T-cell (primary cell): ENCODE measurements at regions of chr17 and their contacts with region 1.

Region 1: DNA sequence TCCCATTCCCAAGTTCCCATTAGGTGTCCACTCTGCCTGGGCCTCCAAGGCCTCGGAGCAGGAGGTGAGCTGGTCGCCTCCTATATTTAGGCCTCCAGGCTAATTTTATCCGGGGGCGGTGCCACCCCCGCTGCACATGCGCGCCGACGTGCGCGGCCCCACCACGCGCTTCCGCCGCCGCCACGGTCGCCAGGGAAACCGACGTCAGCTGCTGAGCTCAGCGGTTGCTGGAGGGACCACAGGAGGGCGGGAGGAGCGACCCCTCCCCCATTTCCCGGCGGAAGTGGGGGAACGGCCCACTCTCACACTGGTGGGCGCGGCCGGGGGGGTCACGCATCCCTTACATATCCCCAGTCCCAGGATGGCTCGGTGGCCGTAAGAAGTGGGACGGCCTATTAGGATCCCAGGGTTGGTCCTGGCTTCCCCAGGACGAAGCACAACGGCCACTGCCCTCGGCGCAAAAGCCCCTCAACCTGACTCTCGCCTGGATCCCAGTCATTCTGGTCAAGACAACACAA is 1.0 kb downstream of the PER1 start:
- DNase-seq: peak; percentile 62 to 96 (median 92)
- ATAC-seq: peak; percentile 53 to 67 (median 64)
- H3K4me3 ChIP-seq: peak overlapping the region; percentile 59 to 93
- H3K4me3 Mint-ChIP-seq: peak overlapping the region in 1 of 3 donors; percentile 84
- H3K27ac ChIP-seq: peak overlapping the region; percentile 100
- H3K27ac Mint-ChIP-seq: peak overlapping the region in 1 of 2 donors; percentile 55
- H3K4me1 ChIP-seq: peaks cover 25 to 68% of the 10 kb centered on the region in 2 experiments
- H3K4me1 Mint-ChIP-seq: peaks cover 40 to 63% (median 43%) of the 10 kb centered on the region in 3 donors
- H3K27me3 ChIP-seq: no peaks in the 10 kb centered on the region
- H3K27me3 Mint-ChIP-seq: no peaks in the 10 kb centered on the region

Region 2: GRCh38 chr17:8005960-8006730 is 145.0 kb before region 1 on chr17:
- CTCF ChIA-PET with region 1: no interaction called
- POLR2A ChIA-PET with region 1: no interaction called
- DNase-seq: peak in 1 of 35 experiments; percentile 19
- ATAC-seq: no peak
- H3K4me3 ChIP-seq: no peak overlapping the region
- H3K4me3 Mint-ChIP-seq: no peak overlapping the region
- H3K27ac ChIP-seq: no peak overlapping the region
- H3K27ac Mint-ChIP-seq: no peak overlapping the region
- H3K4me1 ChIP-seq: peaks cover 0 to 12% of the 10 kb centered on the region in 2 experiments
- H3K4me1 Mint-ChIP-seq: peaks cover 7 to 9% (median 9%) of the 10 kb centered on the region in 3 donors
- H3K27me3 ChIP-seq: peaks cover 0 to 52% of the 10 kb centered on the region in 2 experiments
- H3K27me3 Mint-ChIP-seq: peaks cover 22 to 36% of the 10 kb centered on the region in 2 donors

Region 3: GRCh38 chr17:8041249-8041928 is 109.8 kb before region 1 on chr17:
- CTCF ChIA-PET with region 1: no interaction called
- POLR2A ChIA-PET with region 1: no interaction called
- DNase-seq: peak in 23 of 35 experiments; percentile 12 to 68 (median 23)
- ATAC-seq: peak in 3 of 4 experiments; percentile 23 to 45 (median 42)
- H3K4me3 ChIP-seq: no peak overlapping the region
- H3K4me3 Mint-ChIP-seq: no peak overlapping the region
- H3K27ac ChIP-seq: no peak overlapping the region
- H3K27ac Mint-ChIP-seq: no peak overlapping the region
- H3K4me1 ChIP-seq: peaks cover 0 to 5% of the 10 kb centered on the region in 2 experiments
- H3K4me1 Mint-ChIP-seq: peaks cover 2 to 9% (median 3%) of the 10 kb centered on the region in 3 donors
- H3K27me3 ChIP-seq: peaks cover 0 to 54% of the 10 kb centered on the region in 2 experiments
- H3K27me3 Mint-ChIP-seq: peaks cover 16 to 33% of the 10 kb centered on the region in 2 donors

Region 4: GRCh38 chr17:8072729-8073461 is 78.3 kb before region 1 on chr17:
- CTCF ChIA-PET with region 1: no interaction called
- POLR2A ChIA-PET with region 1: no interaction called
- DNase-seq: peak in 19 of 35 experiments; percentile 13 to 62 (median 31)
- ATAC-seq: peak; percentile 61 to 74 (median 68)
- H3K4me3 ChIP-seq: peak overlapping the region; percentile 35 to 36
- H3K4me3 Mint-ChIP-seq: peak overlapping the region; percentile 63 to 71 (median 66)
- H3K27ac ChIP-seq: no peak overlapping the region
- H3K27ac Mint-ChIP-seq: no peak overlapping the region
- H3K4me1 ChIP-seq: peaks cover 4 to 26% of the 10 kb centered on the region in 2 experiments
- H3K4me1 Mint-ChIP-seq: peaks cover 23 to 28% (median 25%) of the 10 kb centered on the region in 3 donors
- H3K27me3 ChIP-seq: peaks cover 8 to 71% of the 10 kb centered on the region in 2 experiments
- H3K27me3 Mint-ChIP-seq: peaks cover 36 to 49% of the 10 kb centered on the region in 2 donors

Region 5: DNA sequence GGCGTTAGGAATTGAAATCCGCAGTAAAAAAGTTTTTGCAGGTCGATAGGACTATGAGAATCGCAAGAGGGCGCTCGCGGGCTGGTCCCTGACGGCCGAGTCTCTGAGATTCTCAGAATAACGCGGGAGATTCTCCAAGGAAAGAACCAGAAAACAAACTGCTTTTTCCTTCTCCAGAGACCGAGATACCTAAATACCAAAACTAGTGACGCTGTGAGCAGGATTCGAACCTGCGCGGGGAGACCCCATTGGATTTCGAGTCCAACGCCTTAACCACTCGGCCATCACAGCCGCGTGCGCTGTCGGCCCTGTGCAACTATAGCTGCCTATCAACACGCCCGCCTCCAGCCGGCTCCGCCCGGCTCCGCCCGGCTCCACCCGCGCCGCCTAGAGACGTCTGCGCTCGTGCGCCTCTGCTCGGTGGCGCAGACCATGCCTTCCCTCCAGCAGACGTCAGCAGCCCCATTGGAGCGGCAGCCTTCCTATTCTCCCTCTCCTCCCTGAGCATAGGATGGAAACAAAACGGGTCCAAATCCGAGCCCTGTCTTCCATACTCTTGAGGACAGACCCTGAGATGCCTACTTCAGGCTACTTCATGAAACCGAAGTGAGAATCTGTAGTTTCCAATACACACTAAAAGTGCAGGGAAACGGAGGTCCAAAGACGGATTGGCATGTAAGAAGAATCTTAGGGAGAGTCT is 12.4 kb before region 1 on chr17:
- CTCF ChIA-PET with region 1: interaction called in 1 of 2 experiments, 7 read pairs
- POLR2A ChIA-PET with region 1: interaction called, 7 to 19 read pairs
- DNase-seq: peak; percentile 89 to 98 (median 94)
- ATAC-seq: peak; percentile 80 to 97 (median 94)
- H3K4me3 ChIP-seq: peak overlapping the region; percentile 68 to 74
- H3K4me3 Mint-ChIP-seq: no peak overlapping the region
- H3K27ac ChIP-seq: peak overlapping the region; percentile 97
- H3K27ac Mint-ChIP-seq: no peak overlapping the region
- H3K4me1 ChIP-seq: peaks cover 10 to 28% of the 10 kb centered on the region in 2 experiments
- H3K4me1 Mint-ChIP-seq: peaks cover 0 to 12% (median 2%) of the 10 kb centered on the region in 3 donors
- H3K27me3 ChIP-seq: peaks cover 0 to 3% of the 10 kb centered on the region in 2 experiments
- H3K27me3 Mint-ChIP-seq: no peaks in the 10 kb centered on the region